ENCODE measurements at regions of chr11 and their contacts with region 1.

Region 1: DNA sequence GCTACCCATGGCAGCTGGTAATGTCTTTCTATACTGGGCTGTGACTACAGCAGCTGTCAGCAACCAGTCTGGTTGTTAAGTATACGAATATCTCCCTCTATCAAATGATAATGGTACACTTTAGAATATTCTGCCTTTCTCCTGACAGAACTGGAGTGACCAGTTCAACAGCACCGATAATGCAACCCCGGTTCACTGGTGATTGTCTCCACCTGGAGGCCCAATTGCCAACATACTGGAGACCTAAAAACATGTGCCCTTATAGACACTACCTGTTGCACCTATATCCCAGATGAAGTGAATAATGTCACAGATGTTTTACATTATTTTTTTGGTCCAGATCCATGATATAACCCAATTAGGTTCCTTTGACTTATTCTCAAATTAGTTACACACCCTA is 21.1 kb downstream of the OR5P2 start:
- DNase-seq: peak in 1 of 2 experiments; percentile 39
- H3K4me3 ChIP-seq: no peak overlapping the region
- H3K4me3 Mint-ChIP-seq: no peak overlapping the region
- H3K27ac Mint-ChIP-seq: no peak overlapping the region
- H3K4me1 ChIP-seq: no peaks in the 10 kb centered on the region
- H3K4me1 Mint-ChIP-seq: no peaks in the 10 kb centered on the region
- H3K27me3 ChIP-seq: no peaks in the 10 kb centered on the region
- H3K27me3 Mint-ChIP-seq: peaks cover 2% of the 10 kb centered on the region
- CTCF ChIP-seq: no peak

Region 2: GRCh38 chr11:7353100-7353499 is 422.6 kb before region 1 on chr11:
- CTCF ChIA-PET with region 1: no interaction called
- POLR2A ChIA-PET with region 1: no interaction called
- intact Hi-C with region 1: loop called (anchors 2 kb)
- DNase-seq: peak; percentile 39 to 63
- H3K4me3 ChIP-seq: no peak overlapping the region
- H3K4me3 Mint-ChIP-seq: no peak overlapping the region
- H3K27ac Mint-ChIP-seq: no peak overlapping the region
- H3K4me1 ChIP-seq: no peaks in the 10 kb centered on the region
- H3K4me1 Mint-ChIP-seq: no peaks in the 10 kb centered on the region
- H3K27me3 ChIP-seq: no peaks in the 10 kb centered on the region; the same call in 1 of the 2 replicates
- H3K27me3 Mint-ChIP-seq: peaks cover 15% of the 10 kb centered on the region
- CTCF ChIP-seq: peak; percentile 63 to 76

Region 3: GRCh38 chr11:7949934-7950333 is 174.2 kb after region 1 on chr11:
- CTCF ChIA-PET with region 1: no interaction called
- POLR2A ChIA-PET with region 1: no interaction called
- intact Hi-C with region 1: no loop called
- DNase-seq: no peak
- H3K4me3 ChIP-seq: no peak overlapping the region
- H3K4me3 Mint-ChIP-seq: no peak overlapping the region
- H3K27ac Mint-ChIP-seq: no peak overlapping the region
- H3K4me1 ChIP-seq: no peaks in the 10 kb centered on the region
- H3K4me1 Mint-ChIP-seq: no peaks in the 10 kb centered on the region
- H3K27me3 ChIP-seq: no peaks in the 10 kb centered on the region
- H3K27me3 Mint-ChIP-seq: peaks cover 4% of the 10 kb centered on the region
- CTCF ChIP-seq: no peak

Measured in Caco-2 (cell line).